ENCODE measurements at regions of chr16 and their contacts with region 1.

Region 1: GRCh38 chr16:86874141-86874540 is 295.8 kb downstream of the FOXL1 start:
- DNase-seq: peak; percentile 60
- H3K4me3 ChIP-seq: no peak overlapping the region
- H3K27ac ChIP-seq: no peak overlapping the region
- H3K4me1 ChIP-seq: no peaks in the 10 kb centered on the region
- H3K27me3 ChIP-seq: no peaks in the 10 kb centered on the region
- CTCF ChIP-seq: peak; percentile 80 to 81
- POLR2A ChIP-seq: no peak

Region 2: DNA sequence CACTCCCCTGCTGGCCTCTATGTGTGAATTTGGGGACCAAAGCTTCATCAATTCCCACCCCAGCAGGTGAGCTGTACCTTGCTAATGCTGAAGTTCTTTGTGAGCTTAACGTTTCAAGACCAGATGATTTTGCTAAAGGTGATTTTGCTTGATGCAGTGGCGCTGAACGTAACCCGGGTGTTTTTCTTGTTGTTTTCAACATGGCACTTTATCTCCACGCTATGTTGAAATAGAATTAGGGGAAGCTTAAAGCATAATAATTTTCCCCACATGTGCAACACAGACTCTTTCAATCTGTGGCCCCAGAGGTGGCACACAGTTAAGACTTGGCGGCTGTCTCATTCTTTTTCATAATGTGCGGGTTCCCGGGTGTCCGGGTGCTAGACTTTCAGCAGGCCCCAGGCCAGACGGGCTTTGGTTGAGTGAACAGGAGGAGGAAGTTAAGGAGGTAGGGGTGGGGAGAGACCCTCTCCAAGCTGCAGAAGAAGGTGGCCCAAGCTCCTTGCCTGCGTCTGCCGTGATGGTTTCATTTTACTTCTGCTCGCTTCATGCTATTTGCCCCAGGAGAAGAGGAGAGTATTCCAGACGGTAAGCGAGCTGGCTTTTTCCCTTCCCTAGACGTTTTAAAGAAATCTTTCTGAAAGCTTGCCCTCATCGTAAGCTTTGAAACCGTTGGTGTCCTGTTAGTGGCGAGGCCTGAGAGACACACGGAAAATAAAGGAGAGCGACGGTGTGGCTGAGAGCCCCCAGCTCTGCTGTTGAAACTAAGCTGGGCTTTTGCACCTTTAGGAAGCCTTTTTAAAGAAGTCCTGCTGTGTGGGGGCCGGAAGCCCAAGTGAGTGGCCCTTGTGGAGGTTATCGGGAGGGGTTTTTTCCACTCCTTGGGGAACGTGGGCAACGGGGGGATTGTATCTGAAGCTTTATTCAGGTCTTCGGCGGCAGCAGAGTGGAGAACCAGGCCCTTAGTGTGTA is 303.3 kb before region 1 on chr16:
- CTCF ChIA-PET with region 1: interaction called, 39 read pairs
- POLR2A ChIA-PET with region 1: interaction called, 3 read pairs
- dilution Hi-C with region 1: no loop called
- intact Hi-C with region 1: loop called (anchors 1 kb)
- DNase-seq: peak; percentile 57
- H3K4me3 ChIP-seq: peak overlapping the region; percentile 88 to 99 (median 94)
- H3K27ac ChIP-seq: peak overlapping the region; percentile 78
- H3K4me1 ChIP-seq: peaks cover 35% of the 10 kb centered on the region
- H3K27me3 ChIP-seq: no peaks in the 10 kb centered on the region
- CTCF ChIP-seq: no peak
- POLR2A ChIP-seq: no peak

Region 3: DNA sequence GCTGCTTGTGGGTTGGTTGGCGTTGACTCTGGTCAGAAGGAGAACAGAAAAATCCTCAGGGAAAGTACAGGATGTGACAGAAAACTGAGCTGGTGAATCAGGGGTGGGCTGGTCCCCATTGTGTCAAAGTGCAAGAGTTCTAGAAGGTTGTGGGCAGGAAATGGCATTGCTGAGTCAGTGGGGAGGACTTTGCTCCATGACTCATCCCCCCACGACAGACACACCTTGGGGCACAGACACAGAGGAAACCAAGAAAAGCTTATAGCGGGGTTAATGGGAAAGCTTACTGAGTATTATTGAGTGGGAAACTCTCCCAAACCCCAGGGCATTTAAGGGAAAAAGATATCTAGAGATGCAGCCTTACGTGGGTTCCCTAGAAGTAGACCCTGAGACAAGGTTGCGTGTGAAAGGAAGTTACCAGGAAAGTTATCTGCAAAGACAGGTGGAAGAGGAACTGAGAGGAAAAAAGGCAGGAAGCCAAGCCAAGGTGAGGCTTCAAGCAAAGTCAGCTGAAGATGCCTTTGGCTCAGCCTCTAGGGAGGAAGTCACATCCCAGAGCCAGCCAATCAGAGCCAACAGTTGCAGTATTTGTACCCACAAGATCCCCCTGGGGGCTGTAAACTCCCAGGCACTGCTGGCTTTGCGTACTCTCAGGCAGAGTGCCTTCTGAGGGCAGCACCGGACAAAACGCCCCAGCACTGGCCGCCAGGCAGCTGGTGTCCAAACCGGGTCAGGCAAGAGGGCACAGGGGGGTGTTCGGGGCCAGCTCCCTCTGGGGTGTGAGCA is 209.4 kb before region 1 on chr16:
- CTCF ChIA-PET with region 1: interaction called, 10 read pairs
- POLR2A ChIA-PET with region 1: no interaction called
- dilution Hi-C with region 1: no loop called
- intact Hi-C with region 1: loop called (anchors 5 kb)
- DNase-seq: peak; percentile 94
- H3K4me3 ChIP-seq: no peak overlapping the region
- H3K27ac ChIP-seq: peak overlapping the region; percentile 95
- H3K4me1 ChIP-seq: peaks cover 60% of the 10 kb centered on the region
- H3K27me3 ChIP-seq: no peaks in the 10 kb centered on the region
- CTCF ChIP-seq: no peak
- POLR2A ChIP-seq: no peak

Region 4: DNA sequence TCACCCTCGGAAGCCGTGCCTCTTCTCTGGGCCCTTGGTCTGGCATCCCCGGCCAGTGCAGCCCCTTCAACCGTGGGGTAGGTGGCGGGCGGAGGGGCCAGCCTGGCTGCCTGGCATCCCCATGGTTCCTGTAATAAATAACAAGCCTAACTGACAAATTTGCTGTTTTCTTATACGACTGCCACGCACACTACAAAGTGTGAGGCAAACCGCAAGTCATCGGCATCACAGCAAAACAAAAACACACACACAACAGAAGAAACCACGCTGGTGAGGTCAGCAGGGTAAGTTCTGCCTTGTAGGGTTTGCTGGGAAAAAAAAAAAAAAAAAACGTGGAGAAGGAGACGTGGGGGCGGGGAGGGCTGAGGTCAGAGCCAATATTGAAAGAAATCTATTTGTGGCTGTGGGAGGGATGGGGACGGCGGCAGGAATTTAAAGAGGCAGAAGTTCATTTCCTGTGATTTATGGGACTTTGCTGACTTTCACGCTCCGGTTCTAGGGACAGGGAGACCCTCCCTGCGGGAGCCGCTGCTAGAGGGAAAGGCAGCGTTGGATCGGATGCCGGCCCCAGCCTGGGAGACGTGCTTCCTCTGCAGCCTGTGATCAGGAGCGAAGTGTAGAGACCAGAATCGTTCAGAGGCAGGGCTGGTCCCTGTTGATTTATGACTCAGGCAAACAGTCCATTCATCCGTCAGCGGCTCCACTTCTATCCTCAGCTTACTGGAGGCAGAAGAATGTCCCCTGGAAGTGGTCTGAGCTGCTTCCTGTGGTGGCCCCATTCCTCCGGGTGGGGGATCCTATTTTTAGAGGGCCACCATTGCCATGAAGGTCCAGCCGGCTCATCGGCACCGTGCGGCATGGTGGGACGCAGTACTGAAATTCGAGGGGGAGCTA is 133.0 kb before region 1 on chr16:
- CTCF ChIA-PET with region 1: interaction called, 4 read pairs
- POLR2A ChIA-PET with region 1: no interaction called
- dilution Hi-C with region 1: no loop called
- intact Hi-C with region 1: loop called (anchors 2 kb)
- DNase-seq: peak; percentile 92
- H3K4me3 ChIP-seq: peak overlapping the region in 2 of 3 experiments; percentile 15 to 31
- H3K27ac ChIP-seq: peak overlapping the region; percentile 96
- H3K4me1 ChIP-seq: peaks cover 19% of the 10 kb centered on the region
- H3K27me3 ChIP-seq: no peaks in the 10 kb centered on the region
- CTCF ChIP-seq: no peak
- POLR2A ChIP-seq: peak; percentile 75

Region 5: GRCh38 chr16:86823895-86824671 is 50.1 kb before region 1 on chr16:
- CTCF ChIA-PET with region 1: interaction called, 10 read pairs
- POLR2A ChIA-PET with region 1: no interaction called
- dilution Hi-C with region 1: no loop called
- intact Hi-C with region 1: loop called (anchors 1 kb)
- DNase-seq: peak; percentile 87
- H3K4me3 ChIP-seq: peak overlapping the region in 1 of 3 experiments; percentile 7
- H3K27ac ChIP-seq: peak overlapping the region; percentile 93
- H3K4me1 ChIP-seq: peaks cover 50% of the 10 kb centered on the region
- H3K27me3 ChIP-seq: no peaks in the 10 kb centered on the region
- CTCF ChIP-seq: no peak
- POLR2A ChIP-seq: peak; percentile 50

Region 6: DNA sequence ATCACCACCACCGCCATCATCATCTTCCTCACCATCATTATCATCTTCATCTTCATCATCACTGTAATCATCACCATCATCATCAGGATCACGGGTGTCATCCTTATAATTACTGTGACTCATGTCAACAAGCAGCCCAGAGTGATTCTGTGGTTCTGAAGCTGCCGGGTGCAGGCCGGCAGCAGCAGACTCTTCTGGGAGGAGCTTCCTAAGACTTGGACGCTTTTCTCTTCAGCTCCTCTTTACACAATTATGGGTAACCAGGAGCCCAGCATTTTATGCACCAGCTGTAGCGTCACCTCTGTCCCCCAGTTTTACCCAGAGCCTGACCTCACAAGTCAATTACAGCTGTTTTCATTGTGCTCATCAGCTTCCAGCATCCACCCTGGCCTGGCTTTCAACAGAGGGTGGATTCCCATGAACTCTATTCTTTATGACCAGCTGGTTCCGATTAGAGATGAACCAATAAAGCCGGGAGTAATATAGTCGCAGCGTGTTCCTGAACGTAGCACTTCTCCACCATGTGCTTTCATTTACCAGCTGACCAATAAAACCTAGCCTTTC is 20.0 kb before region 1 on chr16:
- CTCF ChIA-PET with region 1: interaction called, 15 read pairs
- POLR2A ChIA-PET with region 1: no interaction called
- dilution Hi-C with region 1: no loop called
- intact Hi-C with region 1: no loop called
- DNase-seq: peak; percentile 63
- H3K4me3 ChIP-seq: no peak overlapping the region
- H3K27ac ChIP-seq: no peak overlapping the region
- H3K4me1 ChIP-seq: peaks cover 6% of the 10 kb centered on the region
- H3K27me3 ChIP-seq: no peaks in the 10 kb centered on the region
- CTCF ChIP-seq: no peak
- POLR2A ChIP-seq: no peak

Region 7: GRCh38 chr16:87278191-87279095 is 404.3 kb after region 1 on chr16:
- CTCF ChIA-PET with region 1: interaction called, 7 read pairs
- POLR2A ChIA-PET with region 1: no interaction called
- dilution Hi-C with region 1: no loop called
- intact Hi-C with region 1: loop called (anchors 10 kb)
- DNase-seq: peak; percentile 86
- H3K4me3 ChIP-seq: no peak overlapping the region
- H3K27ac ChIP-seq: no peak overlapping the region
- H3K4me1 ChIP-seq: peaks cover 4% of the 10 kb centered on the region
- H3K27me3 ChIP-seq: no peaks in the 10 kb centered on the region
- CTCF ChIP-seq: peak; percentile 92 to 94
- POLR2A ChIP-seq: no peak

Measured in endothelial cell of umbilical vein (primary cell).